Mammary epithelial cell (primary cell): ENCODE measurements at regions of chr6 and their contacts with region 1.

Region 1: DNA sequence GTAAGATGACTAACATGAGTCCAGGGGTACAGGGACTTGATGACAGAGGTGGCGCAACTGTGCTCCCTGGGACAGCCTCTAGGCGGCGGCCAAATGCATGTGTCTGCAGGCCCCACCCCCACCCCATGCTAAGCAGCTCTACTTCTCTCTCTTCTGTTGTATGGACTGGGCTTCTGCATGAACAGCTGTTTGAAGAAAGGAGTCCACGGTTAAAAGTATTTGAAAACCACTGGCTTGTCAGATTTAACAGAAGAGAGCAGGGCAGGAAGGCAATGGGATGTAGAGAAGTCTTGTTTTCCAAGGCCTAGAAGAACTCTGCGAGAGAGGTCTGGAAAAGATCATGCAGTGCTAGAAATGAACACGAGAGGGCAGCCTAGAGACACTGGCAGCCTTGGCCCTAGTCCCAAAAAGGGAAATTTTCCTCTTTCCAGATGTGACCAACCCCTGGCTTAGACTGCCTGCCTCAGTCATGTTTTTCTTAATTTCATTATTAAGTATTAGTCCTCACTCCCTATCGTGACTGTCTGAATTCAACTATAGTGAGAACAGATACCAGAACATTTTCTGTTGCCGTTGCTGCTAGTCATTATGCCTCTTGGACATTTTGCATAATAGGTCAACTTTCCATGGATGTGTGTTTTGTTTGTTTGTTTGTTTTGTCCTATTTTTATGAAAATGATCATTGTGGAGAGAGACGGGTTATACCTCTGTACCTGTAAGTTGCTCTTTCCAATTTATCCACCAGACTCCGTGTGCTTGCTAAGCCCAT is 265.0 kb downstream of the ADGRG6 start:
- DNase-seq: peak; percentile 52
- H3K4me3 ChIP-seq: no peak overlapping the region
- H3K27ac ChIP-seq: no peak overlapping the region
- H3K4me1 ChIP-seq: peaks cover 35% of the 10 kb centered on the region
- H3K27me3 ChIP-seq: no peaks in the 10 kb centered on the region
- CTCF ChIP-seq: peak; percentile 95 to 99

Region 2: DNA sequence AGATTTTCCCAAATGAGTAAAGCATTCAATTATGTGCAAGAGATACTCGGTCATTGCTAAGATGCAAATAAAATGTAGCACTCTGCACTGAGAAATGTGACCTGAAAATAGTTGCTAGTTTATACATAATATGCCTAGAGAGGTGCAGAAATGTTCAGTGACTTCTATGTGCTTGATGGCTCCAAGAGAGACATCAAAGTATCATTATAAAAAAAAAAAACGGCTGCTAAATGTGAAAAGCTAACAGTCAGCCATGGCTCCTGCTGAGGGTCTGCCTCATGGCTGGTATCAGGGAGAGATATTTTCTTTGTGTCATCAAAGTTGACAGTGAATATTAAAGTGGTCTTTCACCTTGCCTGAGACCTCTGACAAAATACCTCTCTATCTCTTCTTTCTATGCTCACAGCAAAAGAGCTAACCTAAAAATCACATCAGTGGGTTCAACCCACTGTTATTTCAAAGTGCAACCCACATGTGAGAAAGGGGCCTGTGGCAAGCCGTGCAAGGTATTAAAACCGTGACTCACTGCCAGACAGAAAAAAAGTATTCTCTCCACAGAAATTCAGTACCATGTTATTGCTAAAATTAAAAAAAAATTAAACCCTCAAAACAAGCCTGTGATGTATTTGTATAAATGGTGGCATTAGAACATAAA is 119.2 kb after region 1 on chr6:
- CTCF ChIA-PET with region 1: no interaction called
- dilution Hi-C with region 1: no loop called
- in situ Hi-C with region 1: loop called in 1 of 2 experiments (anchors 5 kb)
- intact Hi-C with region 1: loop called (anchors 2 kb)
- DNase-seq: no peak
- H3K4me3 ChIP-seq: no peak overlapping the region
- H3K27ac ChIP-seq: no peak overlapping the region
- H3K4me1 ChIP-seq: peaks cover 26% of the 10 kb centered on the region
- H3K27me3 ChIP-seq: no peaks in the 10 kb centered on the region
- CTCF ChIP-seq: no peak